ENCODE measurements at regions of chr4 and their contacts with region 1.

Region 1: GRCh38 chr4:4541661-4542570 is at the start of gene STX18:
- DNase-seq: peak; percentile 88
- ATAC-seq: peak; percentile 95
- H3K4me3 Mint-ChIP-seq: peak within 1 kb of the TSS; percentile 98
- H3K27ac Mint-ChIP-seq: peak within 1 kb of the TSS; percentile 98
- H3K4me1 Mint-ChIP-seq: peaks cover 23% of the 10 kb centered on the region
- H3K27me3 Mint-ChIP-seq: no peaks in the 10 kb centered on the region
- CTCF ChIP-seq: no peak
- total RNA-seq, gene STX18: 14.1 to 16.9 TPM (median 16.7 TPM) in 3 replicates

Region 2: GRCh38 chr4:4519297-4519894 is 22.5 kb before region 1 on chr4:
- CTCF ChIA-PET with region 1: interaction called, 15 read pairs
- POLR2A ChIA-PET with region 1: no interaction called
- DNase-seq: no peak
- ATAC-seq: peak; percentile 50
- H3K4me3 Mint-ChIP-seq: no peak overlapping the region
- H3K27ac Mint-ChIP-seq: no peak overlapping the region
- H3K4me1 Mint-ChIP-seq: peaks cover 11% of the 10 kb centered on the region
- H3K27me3 Mint-ChIP-seq: no peaks in the 10 kb centered on the region
- CTCF ChIP-seq: peak; percentile 39; the same call in 1 of the 2 replicates